Activated CD8-positive, alpha-beta memory T cell treated with anti-CD3 and anti-CD28 coated beads, Interleukin-2, amount 10 ng/mL, durations not matched to agents 7 days and 5 days (primary cell): ENCODE measurements at regions of chr2 and their contacts with region 1.

Region 1: GRCh38 chr2:218876562-218877219 is 4.0 kb upstream of the WNT10A start:
- DNase-seq: peak; percentile 71
- ATAC-seq: no peak
- H3K4me3 Mint-ChIP-seq: no peak overlapping the region
- H3K27ac Mint-ChIP-seq: no peak overlapping the region
- H3K4me1 Mint-ChIP-seq: peaks cover 17% of the 10 kb centered on the region
- H3K27me3 Mint-ChIP-seq: peaks cover 78% of the 10 kb centered on the region

Region 2: GRCh38 chr2:218860950-218861381 is 15.7 kb before region 1 on chr2:
- CTCF ChIA-PET with region 1: interaction called, 14 read pairs
- DNase-seq: no peak
- ATAC-seq: no peak
- H3K4me3 Mint-ChIP-seq: no peak overlapping the region
- H3K27ac Mint-ChIP-seq: no peak overlapping the region
- H3K4me1 Mint-ChIP-seq: peaks cover 10% of the 10 kb centered on the region
- H3K27me3 Mint-ChIP-seq: peaks cover 74% of the 10 kb centered on the region

Region 3: DNA sequence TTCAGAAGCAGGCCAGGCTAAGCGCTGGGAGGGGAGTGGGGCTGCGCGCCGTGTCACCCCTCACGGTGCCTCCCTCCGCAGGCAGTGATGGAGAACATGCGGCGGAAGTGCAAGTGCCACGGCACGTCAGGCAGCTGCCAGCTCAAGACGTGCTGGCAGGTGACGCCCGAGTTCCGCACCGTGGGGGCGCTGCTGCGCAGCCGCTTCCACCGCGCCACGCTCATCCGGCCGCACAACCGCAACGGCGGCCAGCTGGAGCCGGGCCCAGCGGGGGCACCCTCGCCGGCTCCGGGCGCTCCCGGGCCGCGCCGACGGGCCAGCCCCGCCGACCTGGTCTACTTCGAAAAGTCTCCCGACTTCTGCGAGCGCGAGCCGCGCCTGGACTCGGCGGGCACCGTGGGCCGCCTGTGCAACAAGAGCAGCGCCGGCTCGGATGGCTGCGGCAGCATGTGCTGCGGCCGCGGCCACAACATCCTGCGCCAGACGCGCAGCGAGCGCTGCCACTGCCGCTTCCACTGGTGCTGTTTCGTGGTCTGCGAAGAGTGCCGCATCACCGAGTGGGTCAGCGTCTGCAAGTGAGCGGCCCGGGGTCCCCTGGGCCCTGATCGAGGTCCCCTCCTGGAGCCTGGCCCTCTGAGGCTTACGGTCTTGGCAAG is 16.1 kb after region 1 on chr2:
- CTCF ChIA-PET with region 1: interaction called, 735 read pairs
- DNase-seq: peak; percentile 86
- ATAC-seq: peak; percentile 70
- H3K4me3 Mint-ChIP-seq: peak overlapping the region; percentile 51
- H3K27ac Mint-ChIP-seq: peak overlapping the region; percentile 76
- H3K4me1 Mint-ChIP-seq: peaks cover 39% of the 10 kb centered on the region
- H3K27me3 Mint-ChIP-seq: peaks cover 62% of the 10 kb centered on the region

Region 4: DNA sequence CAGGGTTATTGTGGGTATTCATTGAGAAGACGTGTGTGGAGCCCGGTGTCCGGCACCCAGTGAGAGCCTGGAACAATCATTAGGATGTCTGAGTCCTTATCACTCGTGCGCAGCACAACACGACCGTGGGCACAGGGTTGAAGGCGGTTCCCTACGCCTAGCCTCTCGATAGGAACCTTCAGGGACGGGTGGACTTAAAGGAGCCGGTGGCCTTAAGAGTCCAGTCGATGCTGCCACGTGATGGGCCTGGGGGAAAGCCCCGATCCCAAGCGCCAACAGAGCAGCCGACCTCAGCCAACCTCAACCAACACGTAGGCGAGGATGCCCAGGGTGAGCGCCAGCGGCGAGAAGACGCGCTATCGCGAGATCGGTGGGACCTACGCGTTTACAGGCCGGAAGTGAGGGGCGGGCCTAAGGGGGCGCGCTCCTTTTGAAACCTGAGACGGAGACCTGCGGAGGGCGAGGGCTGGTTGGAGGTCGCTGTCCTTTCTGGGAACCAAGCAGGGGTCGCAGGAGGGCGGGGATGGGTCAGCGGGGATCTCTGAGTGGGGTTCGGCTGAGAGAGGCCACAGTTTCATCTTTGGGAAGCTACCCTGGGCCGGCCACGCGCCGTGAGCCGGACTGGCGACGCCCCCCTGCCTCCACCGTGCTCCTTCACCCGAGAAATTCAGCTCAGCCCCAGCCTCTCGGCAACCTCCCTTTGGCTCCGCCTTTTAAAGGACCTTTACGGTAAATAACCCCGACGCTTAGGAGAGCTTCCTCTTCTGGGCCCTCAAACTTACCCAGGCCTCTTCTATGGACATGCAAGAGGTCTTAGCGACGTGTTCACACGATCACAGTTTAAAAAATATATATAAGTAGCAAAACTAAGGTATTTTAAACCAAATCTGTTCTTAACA is 32.3 kb after region 1 on chr2:
- CTCF ChIA-PET with region 1: interaction called, 735 read pairs
- DNase-seq: peak; percentile 95
- ATAC-seq: peak; percentile 98
- H3K4me3 Mint-ChIP-seq: peak overlapping the region; percentile 82
- H3K27ac Mint-ChIP-seq: peak overlapping the region; percentile 84
- H3K4me1 Mint-ChIP-seq: peaks cover 17% of the 10 kb centered on the region
- H3K27me3 Mint-ChIP-seq: peaks cover 27% of the 10 kb centered on the region